Breast epithelium (tissue), 4 donors: ENCODE measurements at regions of chr1 and their contacts with region 1.

Region 1: DNA sequence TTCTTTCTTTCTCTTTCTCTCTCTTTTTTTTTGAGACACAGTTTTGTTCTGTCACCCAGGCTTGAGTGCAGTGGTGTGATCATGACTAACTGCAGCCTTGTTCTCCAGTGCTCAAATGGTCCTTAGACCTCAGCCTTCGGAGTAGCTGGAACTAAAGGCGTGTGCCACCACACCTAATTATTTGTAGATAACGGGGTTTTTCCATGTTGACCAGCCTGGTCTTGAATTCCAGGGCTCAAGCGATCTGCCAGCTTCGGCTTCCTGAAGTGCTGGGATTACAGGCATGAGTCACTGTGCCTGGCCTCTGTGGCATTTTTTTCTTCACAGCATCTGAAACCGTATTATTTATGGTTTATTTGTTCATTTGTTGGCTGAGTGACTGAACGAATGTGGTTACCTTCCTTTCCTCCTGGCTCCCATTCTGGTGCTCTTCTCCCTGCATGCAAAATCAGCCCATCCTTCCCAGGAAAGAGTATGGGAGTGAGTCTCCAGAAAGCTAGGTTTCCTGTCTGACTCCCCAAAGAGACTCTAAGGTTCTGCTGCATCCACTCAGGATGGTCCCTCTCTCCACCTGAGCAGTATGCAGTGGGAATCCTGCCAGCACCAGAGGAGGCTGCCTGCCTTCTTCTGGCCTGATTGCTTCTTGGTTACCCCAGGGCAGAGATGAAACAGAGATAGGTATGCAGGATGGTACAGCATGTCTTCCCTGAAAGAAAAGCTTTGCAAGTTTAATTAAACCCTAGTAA is 155.0 kb upstream of the BEND5 start:
- DNase-seq: peak; percentile 52 to 78
- H3K4me3 ChIP-seq: peak overlapping the region in 1 of 3 donors; percentile 10
- H3K27ac ChIP-seq: peak overlapping the region; percentile 61 to 79
- H3K4me1 ChIP-seq: no peaks in the 10 kb centered on the region
- H3K27me3 ChIP-seq: no peaks in the 10 kb centered on the region
- CTCF ChIP-seq: no peak
- POLR2A ChIP-seq: no peak

Region 2: GRCh38 chr1:48701445-48701844 is 230.2 kb before region 1 on chr1:
- intact Hi-C with region 1: loop called (anchors 5 kb)
- DNase-seq: no peak
- H3K4me3 ChIP-seq: no peak overlapping the region
- H3K27ac ChIP-seq: no peak overlapping the region
- H3K4me1 ChIP-seq: no peaks in the 10 kb centered on the region
- H3K27me3 ChIP-seq: no peaks in the 10 kb centered on the region
- CTCF ChIP-seq: no peak
- POLR2A ChIP-seq: no peak

Region 3: DNA sequence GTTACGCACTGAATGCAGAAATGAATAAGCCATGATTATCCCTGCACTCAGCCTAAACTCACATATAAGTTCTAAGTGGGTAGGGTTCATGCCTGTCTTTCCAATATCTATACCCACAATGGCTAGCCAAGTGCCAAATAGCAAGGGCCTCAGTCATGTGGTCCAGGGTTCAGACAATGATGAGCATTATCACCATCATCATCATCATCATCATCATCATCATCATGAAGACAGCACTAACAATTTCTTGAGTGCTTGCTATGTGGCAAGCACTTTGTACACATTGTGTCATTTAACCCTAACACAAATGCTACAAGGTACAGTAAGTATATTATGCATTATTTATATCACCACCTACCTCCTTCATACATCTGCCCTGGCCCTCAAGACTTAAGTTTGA is 592.1 kb after region 1 on chr1:
- intact Hi-C with region 1: no loop called
- DNase-seq: no peak
- H3K4me3 ChIP-seq: no peak overlapping the region
- H3K27ac ChIP-seq: no peak overlapping the region
- H3K4me1 ChIP-seq: no peaks in the 10 kb centered on the region
- H3K27me3 ChIP-seq: no peaks in the 10 kb centered on the region
- CTCF ChIP-seq: no peak
- POLR2A ChIP-seq: no peak